PC-3 (cell line): ENCODE measurements at regions of chr4 and their contacts with region 1.

Region 1: GRCh38 chr4:154686838-154687237 is 57.0 kb upstream of the LRAT start:
- DNase-seq: peak; percentile 35
- ATAC-seq: no peak
- H3K4me3 ChIP-seq: no peak overlapping the region
- H3K27ac ChIP-seq: no peak overlapping the region
- H3K4me1 ChIP-seq: no peaks in the 10 kb centered on the region
- H3K27me3 ChIP-seq: peaks cover 17% of the 10 kb centered on the region
- CTCF ChIP-seq: peak; percentile 43; the same call in 1 of the 2 replicates

Region 2: GRCh38 chr4:154743683-154744340 is 57.0 kb after region 1 on chr4 and contains the start of gene LRAT:
- CTCF ChIA-PET with region 1: interaction called, 18 read pairs
- POLR2A ChIA-PET with region 1: interaction called, 4 read pairs
- intact Hi-C with region 1: no loop called
- DNase-seq: peak; percentile 72
- ATAC-seq: peak; percentile 93
- H3K4me3 ChIP-seq: peak within 1 kb of the TSS; percentile 80
- H3K27ac ChIP-seq: no peak within 1 kb of the TSS
- H3K4me1 ChIP-seq: peaks cover 7% of the 10 kb centered on the region
- H3K27me3 ChIP-seq: no peaks in the 10 kb centered on the region
- CTCF ChIP-seq: peak; percentile 25; the same call in 1 of the 2 replicates
- total RNA-seq, gene LRAT: 0.55 and 0.92 TPM in 2 replicates